HepG2 (cell line): ENCODE measurements at regions of chr16 and their contacts with region 1.

Region 1: DNA sequence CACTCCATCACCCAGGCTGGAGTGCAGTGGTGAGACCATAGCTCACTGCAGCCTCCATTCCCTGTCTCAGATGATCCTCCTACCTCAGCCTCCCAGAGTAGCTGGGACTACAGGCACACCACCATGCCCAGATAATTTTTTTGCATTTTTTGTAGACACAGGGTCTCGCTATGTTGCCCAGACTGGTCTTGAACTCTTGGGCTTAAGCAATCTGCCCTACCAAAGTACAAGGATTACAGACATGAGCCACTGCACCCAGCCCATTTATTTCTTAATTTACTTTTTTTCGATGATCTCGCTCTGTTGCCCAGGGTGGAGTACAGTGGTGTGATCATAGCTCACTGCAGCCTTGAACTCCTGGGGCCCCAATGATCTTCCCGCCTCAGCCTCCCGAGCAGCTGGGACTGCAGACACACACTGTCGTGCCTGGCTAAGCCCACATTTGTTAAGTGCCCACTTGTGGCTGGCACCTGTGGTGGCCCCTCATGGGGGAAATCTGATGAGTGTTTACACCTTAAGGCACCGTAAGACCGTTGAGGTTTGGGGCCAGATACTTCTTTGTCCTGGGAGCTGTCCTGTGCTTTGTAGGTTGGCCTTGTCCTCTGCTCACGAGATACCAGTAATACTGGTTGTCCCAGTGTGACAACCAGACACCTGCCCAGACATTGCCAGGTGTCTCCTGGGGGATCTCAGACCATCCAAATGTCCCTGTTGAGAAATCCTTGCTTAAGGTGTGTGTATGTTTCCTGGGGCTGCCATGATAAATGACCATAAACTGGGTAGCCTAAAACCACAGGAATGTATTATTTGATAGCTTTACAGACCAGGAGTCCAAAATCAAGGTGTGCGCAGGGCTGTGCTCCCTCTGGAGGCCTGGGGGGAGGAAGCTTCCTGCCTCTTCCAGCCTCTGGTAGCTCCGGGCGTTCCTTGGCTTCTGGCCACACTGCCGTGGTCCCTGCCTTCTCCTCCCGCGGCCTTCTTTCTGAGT is 141.4 kb upstream of the GSE1 start:
- DNase-seq: no peak
- ATAC-seq: peak; percentile 51
- H3K4me3 ChIP-seq: no peak overlapping the region
- H3K27ac ChIP-seq: no peak overlapping the region
- H3K4me1 ChIP-seq: peaks cover 22% of the 10 kb centered on the region
- H3K27me3 ChIP-seq: peaks cover 21 to 61% of the 10 kb centered on the region in 2 experiments
- CTCF ChIP-seq: peak; percentile 30; the same call in 1 of the 2 replicates
- EP300 ChIP-seq: no peak
- POLR2A ChIP-seq: no peak
- RAD21 ChIP-seq: no peak

Region 2: GRCh38 chr16:85428168-85428898 is 43.4 kb before region 1 on chr16:
- CTCF ChIA-PET with region 1: no interaction called
- POLR2A ChIA-PET with region 1: no interaction called
- in situ Hi-C with region 1: no loop called
- intact Hi-C with region 1: loop called (anchors 1 kb)
- DNase-seq: no peak
- ATAC-seq: peak; percentile 37
- H3K4me3 ChIP-seq: no peak overlapping the region
- H3K27ac ChIP-seq: no peak overlapping the region
- H3K4me1 ChIP-seq: peaks cover 5% of the 10 kb centered on the region
- H3K27me3 ChIP-seq: peaks cover 14 to 30% of the 10 kb centered on the region in 2 experiments
- CTCF ChIP-seq: peak; percentile 88
- EP300 ChIP-seq: no peak
- POLR2A ChIP-seq: no peak
- RAD21 ChIP-seq: peak; percentile 54